ENCODE measurements at regions of chr6 and their contacts with region 1.

Region 1: DNA sequence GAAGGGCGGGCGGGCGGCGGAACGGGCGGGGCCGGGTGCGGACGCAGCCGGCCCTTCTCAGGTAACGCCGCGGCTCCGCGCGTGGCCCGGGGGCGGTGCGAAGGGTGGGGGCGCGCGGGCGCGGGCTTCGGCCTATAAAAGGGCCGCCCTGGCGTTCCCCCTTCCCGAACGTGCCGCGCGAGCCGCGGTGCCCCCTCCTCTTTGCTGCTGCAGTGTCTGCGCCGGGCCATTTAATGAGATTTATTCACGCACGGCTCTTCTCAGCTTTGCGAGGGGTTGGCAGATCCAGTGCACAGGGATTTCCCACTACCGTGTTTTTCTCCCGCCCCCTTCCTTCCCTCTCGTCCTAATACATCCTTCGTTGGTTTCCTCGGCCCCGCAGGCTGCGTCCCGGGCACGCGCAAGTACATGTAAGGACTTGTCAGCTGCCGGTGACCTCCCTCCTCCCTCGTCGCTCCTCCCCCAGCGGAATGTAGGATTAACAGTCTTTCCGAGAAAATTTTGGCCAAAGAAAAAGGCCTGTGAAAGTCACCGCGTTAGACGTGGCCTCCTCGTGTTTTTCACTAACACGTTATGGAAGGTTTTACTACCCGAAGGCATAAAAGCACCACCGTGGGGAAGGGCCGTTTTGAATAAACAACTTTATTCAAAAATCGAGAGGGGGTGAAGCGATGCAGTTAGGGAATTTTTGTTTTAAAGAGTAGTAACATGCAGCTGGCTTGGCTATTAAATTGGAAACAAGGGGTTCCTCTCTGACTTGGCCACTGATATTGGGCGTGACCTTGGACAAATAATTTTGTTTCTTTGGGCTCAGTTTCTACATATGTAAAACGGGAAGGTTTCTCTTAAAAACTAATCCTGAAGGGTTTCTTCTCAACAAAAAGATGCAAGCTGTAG is 966 bp upstream of the REV3L start:
- DNase-seq: peak; percentile 67
- H3K4me3 ChIP-seq: peak overlapping the region; percentile 79 to 99 (median 94)
- H3K27ac ChIP-seq: peak overlapping the region; percentile 96 to 100 (median 100)
- H3K4me1 ChIP-seq: peaks cover 10 to 46% (median 19%) of the 10 kb centered on the region in 3 donors
- H3K27me3 ChIP-seq: no peaks in the 10 kb centered on the region
- CTCF ChIP-seq: peak in 1 of 6 experiments; percentile 10
- POLR2A ChIP-seq: peak in 2 of 4 donors; percentile 61 to 84

Region 2: DNA sequence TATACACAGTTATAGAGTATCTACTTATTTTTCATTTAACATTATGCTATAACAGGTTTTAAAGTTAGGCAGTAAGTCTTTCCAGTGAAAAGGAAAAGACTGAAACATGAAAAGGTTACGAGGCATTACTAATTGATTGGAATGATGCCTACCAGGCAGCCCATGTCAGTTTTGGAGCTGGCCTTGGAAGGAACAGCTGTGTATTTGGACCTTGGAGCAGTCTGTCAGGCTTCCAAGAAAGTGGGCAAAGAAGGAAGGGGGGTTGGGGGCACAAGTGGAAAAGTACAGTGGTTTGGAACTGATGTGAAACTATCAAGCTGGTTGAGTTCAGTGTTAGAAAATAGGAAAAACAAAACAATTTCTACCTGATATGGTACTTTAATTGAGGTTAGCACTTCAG is 355.0 kb before region 1 on chr6:
- intact Hi-C with region 1: no loop called
- DNase-seq: no peak
- H3K4me3 ChIP-seq: no peak overlapping the region
- H3K27ac ChIP-seq: no peak overlapping the region
- H3K4me1 ChIP-seq: no peaks in the 10 kb centered on the region
- H3K27me3 ChIP-seq: no peaks in the 10 kb centered on the region
- CTCF ChIP-seq: no peak
- POLR2A ChIP-seq: no peak

Region 3: DNA sequence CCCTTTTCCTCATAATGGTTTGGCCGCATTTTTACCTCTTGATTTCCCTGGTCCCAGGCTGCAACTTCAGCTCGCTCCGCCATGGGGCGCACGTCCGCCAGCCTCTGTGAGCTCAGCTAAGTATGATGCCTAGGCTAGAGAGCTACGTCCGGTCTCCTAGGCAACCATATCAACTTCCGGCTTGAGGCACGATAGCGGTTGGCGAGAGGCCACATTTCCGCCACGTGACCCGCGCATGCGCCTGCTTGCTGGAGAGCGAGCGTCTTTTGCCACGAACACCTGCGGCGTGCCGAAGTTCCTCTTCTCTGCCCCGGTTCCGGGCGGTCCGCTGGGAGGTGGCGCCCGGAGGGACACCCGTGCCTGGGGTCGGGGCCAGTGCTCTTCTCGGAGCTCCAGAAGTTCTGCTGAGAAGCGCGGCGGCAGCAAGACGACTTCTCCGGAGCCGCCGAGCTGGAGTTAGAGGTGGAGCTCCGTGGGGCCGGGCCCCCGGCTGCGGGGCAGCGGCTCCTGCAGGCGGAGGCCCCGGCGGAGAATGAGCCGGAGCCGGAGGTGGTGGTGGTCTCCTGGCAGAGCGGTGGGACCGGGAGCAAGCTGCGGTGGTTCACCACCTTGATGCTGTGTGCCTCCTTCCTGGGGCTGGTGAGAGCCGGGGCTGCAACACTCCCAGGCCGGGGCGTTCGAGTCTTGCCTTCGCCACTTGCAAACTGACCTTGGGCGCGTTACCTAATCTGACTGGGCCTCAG is 224.7 kb before region 1 on chr6:
- intact Hi-C with region 1: loop called (anchors 10 kb)
- DNase-seq: peak; percentile 94
- H3K4me3 ChIP-seq: peak overlapping the region; percentile 73 to 87 (median 82)
- H3K27ac ChIP-seq: peak overlapping the region; percentile 83 to 94 (median 89)
- H3K4me1 ChIP-seq: peaks cover 12 to 31% (median 19%) of the 10 kb centered on the region in 3 donors
- H3K27me3 ChIP-seq: peaks cover 0 to 17% (median 0%) of the 10 kb centered on the region in 4 donors
- CTCF ChIP-seq: peak; percentile 90 to 99 (median 98)
- POLR2A ChIP-seq: peak in 3 of 4 donors; percentile 48 to 74 (median 54)

Region 4: GRCh38 chr6:111552241-111552744 is 68.3 kb after region 1 on chr6:
- intact Hi-C with region 1: loop called (anchors 10 kb)
- DNase-seq: no peak
- H3K4me3 ChIP-seq: peak overlapping the region in 1 of 4 donors; percentile 31
- H3K27ac ChIP-seq: peak overlapping the region; percentile 16 to 70 (median 64)
- H3K4me1 ChIP-seq: peaks cover 11 to 67% (median 45%) of the 10 kb centered on the region in 3 donors
- H3K27me3 ChIP-seq: no peaks in the 10 kb centered on the region
- CTCF ChIP-seq: no peak
- POLR2A ChIP-seq: no peak

Region 5: GRCh38 chr6:111774346-111774703 is 290.3 kb after region 1 on chr6:
- intact Hi-C with region 1: no loop called
- DNase-seq: no peak
- H3K4me3 ChIP-seq: no peak overlapping the region
- H3K27ac ChIP-seq: peak overlapping the region in 2 of 4 donors; percentile 39 to 72
- H3K4me1 ChIP-seq: peaks cover 4 to 46% (median 16%) of the 10 kb centered on the region in 3 donors
- H3K27me3 ChIP-seq: no peaks in the 10 kb centered on the region
- CTCF ChIP-seq: no peak
- POLR2A ChIP-seq: no peak

Measured in esophagus squamous epithelium (tissue), 5 donors.